Activated CD4-positive, alpha-beta T cell treated with anti-CD3 and anti-CD28 coated beads for 36 hours (primary cell): ENCODE measurements at regions of chr2 and their contacts with region 1.

Region 1: GRCh38 chr2:181281206-181281832 is 175.9 kb upstream of the ITGA4 start:
- DNase-seq: no peak
- ATAC-seq: peak; percentile 65
- H3K4me3 Mint-ChIP-seq: no peak overlapping the region
- H3K27ac Mint-ChIP-seq: peak overlapping the region; percentile 71
- H3K4me1 Mint-ChIP-seq: peaks cover 23% of the 10 kb centered on the region
- H3K27me3 Mint-ChIP-seq: no peaks in the 10 kb centered on the region

Region 2: GRCh38 chr2:181258720-181259119 is 22.6 kb before region 1 on chr2:
- CTCF ChIA-PET with region 1: no interaction called
- POLR2A ChIA-PET with region 1: no interaction called
- intact Hi-C with region 1: loop called in 1 of 2 experiments (anchors 2 kb)
- DNase-seq: no peak
- ATAC-seq: peak; percentile 16
- H3K4me3 Mint-ChIP-seq: no peak overlapping the region
- H3K27ac Mint-ChIP-seq: no peak overlapping the region
- H3K4me1 Mint-ChIP-seq: peaks cover 14% of the 10 kb centered on the region
- H3K27me3 Mint-ChIP-seq: no peaks in the 10 kb centered on the region

Region 3: GRCh38 chr2:181364492-181365170 is 83.3 kb after region 1 on chr2:
- CTCF ChIA-PET with region 1: no interaction called
- POLR2A ChIA-PET with region 1: no interaction called
- intact Hi-C with region 1: no loop called
- DNase-seq: no peak
- ATAC-seq: no peak
- H3K4me3 Mint-ChIP-seq: no peak overlapping the region
- H3K27ac Mint-ChIP-seq: no peak overlapping the region
- H3K4me1 Mint-ChIP-seq: no peaks in the 10 kb centered on the region
- H3K27me3 Mint-ChIP-seq: no peaks in the 10 kb centered on the region

Region 4: GRCh38 chr2:181411105-181411849 is 130.0 kb after region 1 on chr2:
- CTCF ChIA-PET with region 1: no interaction called
- POLR2A ChIA-PET with region 1: no interaction called
- intact Hi-C with region 1: no loop called
- DNase-seq: no peak
- ATAC-seq: no peak
- H3K4me3 Mint-ChIP-seq: no peak overlapping the region
- H3K27ac Mint-ChIP-seq: no peak overlapping the region
- H3K4me1 Mint-ChIP-seq: peaks cover 2% of the 10 kb centered on the region
- H3K27me3 Mint-ChIP-seq: no peaks in the 10 kb centered on the region

Region 5: GRCh38 chr2:181471783-181472182 is 190.5 kb after region 1 on chr2:
- CTCF ChIA-PET with region 1: no interaction called
- POLR2A ChIA-PET with region 1: no interaction called
- intact Hi-C with region 1: no loop called
- DNase-seq: peak; percentile 22
- ATAC-seq: peak; percentile 62
- H3K4me3 Mint-ChIP-seq: no peak overlapping the region
- H3K27ac Mint-ChIP-seq: peak overlapping the region; percentile 70
- H3K4me1 Mint-ChIP-seq: peaks cover 63% of the 10 kb centered on the region
- H3K27me3 Mint-ChIP-seq: no peaks in the 10 kb centered on the region